Lower lobe of right lung (tissue), 2 donors: ENCODE measurements at regions of chr22 and their contacts with region 1.

Region 1: DNA sequence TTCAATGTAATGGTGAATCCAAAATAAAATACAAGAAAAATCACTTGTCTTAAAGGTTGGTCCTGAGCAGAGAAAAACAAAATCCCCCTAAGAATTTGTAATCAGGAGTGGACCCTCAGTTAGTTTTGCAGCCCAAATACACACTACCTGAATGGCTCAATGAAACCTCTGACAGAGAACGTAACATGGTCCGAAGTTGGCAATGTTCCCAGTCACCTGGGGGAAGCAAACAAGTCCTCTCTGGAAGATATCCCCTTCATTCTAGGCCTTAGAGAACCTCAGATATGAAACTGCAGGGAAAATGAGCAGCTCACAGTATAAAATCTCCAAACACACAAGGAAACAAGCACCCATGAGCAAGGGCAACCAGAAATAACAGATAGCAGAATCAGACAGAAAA is 58.2 kb downstream of the MORC2 start:
- DNase-seq: no peak
- ATAC-seq: no peak
- H3K4me3 ChIP-seq: no peak overlapping the region
- H3K27ac ChIP-seq: no peak overlapping the region
- H3K4me1 ChIP-seq: no peaks in the 10 kb centered on the region
- H3K27me3 ChIP-seq: no peaks in the 10 kb centered on the region
- CTCF ChIP-seq: no peak

Region 2: DNA sequence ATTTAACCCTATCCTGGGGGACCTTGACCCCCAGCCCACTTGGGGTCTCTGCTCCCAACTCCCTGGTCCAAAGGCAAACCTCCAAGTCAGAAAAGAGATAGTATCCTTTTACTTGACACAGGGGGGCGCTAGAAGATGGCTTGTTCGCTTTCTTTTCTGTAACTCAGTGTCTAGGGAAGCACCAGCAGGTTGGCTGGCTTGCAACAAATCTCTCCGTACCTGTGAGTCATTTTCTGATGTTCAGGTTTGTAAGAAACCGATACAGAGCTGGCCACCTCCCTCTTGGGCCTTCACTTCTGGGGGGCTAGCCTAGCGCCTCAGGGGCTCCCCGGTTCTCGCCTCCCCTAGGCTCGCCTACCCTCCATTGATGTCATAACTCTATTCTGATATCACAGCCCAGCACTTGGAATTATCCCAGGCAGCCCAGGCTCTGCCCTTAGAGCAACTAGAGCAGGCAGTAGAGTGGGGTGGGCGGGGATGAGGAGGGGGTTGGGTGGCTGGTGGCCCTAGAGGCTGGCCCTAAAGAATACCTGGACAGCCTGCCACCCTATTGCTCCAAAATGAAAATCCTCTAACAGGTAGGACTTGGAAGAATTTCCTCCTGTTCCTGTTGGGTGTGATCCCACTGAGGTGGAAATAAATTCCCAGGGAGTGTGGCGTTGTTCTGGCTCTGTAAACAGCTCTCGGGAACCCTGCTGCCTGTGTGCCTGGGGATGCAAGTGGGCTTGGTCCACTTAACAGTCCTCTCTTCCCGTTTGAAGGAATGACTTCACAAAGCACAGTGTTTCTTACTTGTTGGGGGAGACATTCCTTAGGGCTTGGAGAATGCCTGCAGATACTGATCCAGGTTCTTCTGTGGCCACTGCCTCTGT is 146.3 kb before region 1 on chr22:
- intact Hi-C with region 1: loop called (anchors 10 kb)
- DNase-seq: no peak
- ATAC-seq: peak; percentile 73 to 77
- H3K4me3 ChIP-seq: no peak overlapping the region
- H3K27ac ChIP-seq: no peak overlapping the region
- H3K4me1 ChIP-seq: no peaks in the 10 kb centered on the region
- H3K27me3 ChIP-seq: no peaks in the 10 kb centered on the region
- CTCF ChIP-seq: peak; percentile 61

Region 3: DNA sequence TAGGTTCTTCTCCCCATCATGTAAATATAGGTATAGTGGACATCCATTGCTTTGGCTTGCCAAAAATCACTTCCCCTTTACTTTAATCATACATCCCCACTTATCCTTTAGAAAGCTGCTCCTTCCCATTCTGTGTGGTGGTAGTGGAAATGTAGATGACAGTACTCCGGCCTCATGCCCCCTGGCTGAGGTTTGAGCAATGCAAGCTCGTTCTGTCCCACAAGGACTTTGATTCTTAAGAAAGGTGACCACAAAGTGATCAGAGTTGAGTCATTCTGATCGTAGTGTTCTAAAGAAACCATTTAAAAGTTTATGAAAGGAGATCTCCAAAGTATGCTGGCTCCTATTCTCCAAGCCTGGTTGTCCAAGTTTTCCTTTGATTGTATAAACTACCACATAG is 69.6 kb after region 1 on chr22:
- intact Hi-C with region 1: no loop called
- DNase-seq: no peak
- ATAC-seq: no peak
- H3K4me3 ChIP-seq: no peak overlapping the region
- H3K27ac ChIP-seq: no peak overlapping the region
- H3K4me1 ChIP-seq: no peaks in the 10 kb centered on the region
- H3K27me3 ChIP-seq: no peaks in the 10 kb centered on the region
- CTCF ChIP-seq: no peak

Region 4: DNA sequence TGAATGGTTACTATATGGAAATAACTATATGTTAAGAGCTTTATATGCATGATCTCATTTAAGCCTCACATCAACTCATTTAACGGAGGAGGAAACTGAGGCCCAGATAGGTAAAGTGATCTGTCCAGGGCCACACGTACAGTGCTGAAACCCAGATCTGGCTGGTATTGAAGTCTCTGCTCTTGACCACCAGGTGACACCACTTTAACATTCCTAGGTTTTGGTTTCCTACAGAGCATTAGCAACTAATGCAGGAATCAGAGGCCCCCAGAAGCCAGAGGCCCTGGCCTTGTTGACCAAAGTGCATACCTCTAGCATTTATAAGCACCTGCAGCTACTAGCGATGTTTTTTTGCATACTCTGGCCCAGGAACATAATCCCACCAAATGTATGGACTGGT is 288.8 kb after region 1 on chr22:
- intact Hi-C with region 1: no loop called
- DNase-seq: no peak
- ATAC-seq: peak in 1 of 2 donors; percentile 63
- H3K4me3 ChIP-seq: no peak overlapping the region
- H3K27ac ChIP-seq: no peak overlapping the region
- H3K4me1 ChIP-seq: peaks cover 3% of the 10 kb centered on the region
- H3K27me3 ChIP-seq: no peaks in the 10 kb centered on the region
- CTCF ChIP-seq: peak; percentile 43